ENCODE measurements at regions of chr15 and their contacts with region 1.

Region 1: DNA sequence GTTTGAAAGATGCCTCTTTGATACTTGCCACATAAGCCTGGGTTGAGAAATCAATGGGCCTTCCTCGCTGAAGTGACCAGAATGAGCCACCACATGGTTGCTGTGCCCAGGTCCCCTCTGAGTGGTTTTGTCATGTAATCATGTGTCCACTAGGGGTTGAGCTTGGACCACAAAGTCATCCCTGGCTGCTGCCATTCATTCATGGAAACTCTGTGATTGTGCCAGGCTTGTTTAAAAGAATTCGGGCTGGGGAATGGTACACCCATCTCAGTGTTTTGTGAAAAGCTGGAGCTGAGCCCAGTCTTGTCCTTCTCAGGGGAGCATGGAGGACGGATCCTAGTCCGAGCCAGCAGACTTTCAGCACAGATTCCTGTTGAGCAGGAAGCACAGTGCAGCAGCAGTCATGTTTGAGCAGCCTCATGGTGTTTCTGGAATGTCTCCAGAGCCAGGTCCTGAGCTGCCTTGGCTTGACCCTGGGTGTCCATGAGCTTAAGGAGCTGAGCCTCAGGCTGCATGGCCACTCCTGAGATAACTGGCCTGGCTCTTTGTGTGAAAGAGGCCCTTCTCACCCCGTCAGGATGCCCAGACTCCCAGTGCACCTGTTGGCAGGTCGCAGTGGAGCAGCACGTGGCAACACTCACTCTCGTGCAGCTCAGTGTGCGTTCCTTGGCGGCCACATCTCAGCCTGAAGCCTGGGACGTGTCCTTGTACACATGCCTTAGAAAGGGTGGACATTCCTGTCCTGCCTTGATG is 260.3 kb upstream of the TPM1 start:
- DNase-seq: peak; percentile 50 to 93
- ATAC-seq: peak; percentile 89 to 95 (median 93)
- H3K4me3 ChIP-seq: no peak overlapping the region
- H3K27ac ChIP-seq: peak overlapping the region in 9 of 10 donors; percentile 23 to 80 (median 69)
- H3K4me1 ChIP-seq: peaks cover 11 to 62% (median 43%) of the 10 kb centered on the region in 9 donors
- H3K27me3 ChIP-seq: no peaks in the 10 kb centered on the region
- CTCF ChIP-seq: peak; percentile 55 to 84 (median 71)

Region 2: GRCh38 chr15:62698646-62699045 is 83.6 kb before region 1 on chr15:
- intact Hi-C with region 1: no loop called
- DNase-seq: no peak
- ATAC-seq: peak in 5 of 8 donors; percentile 40 to 70 (median 46)
- H3K4me3 ChIP-seq: no peak overlapping the region
- H3K27ac ChIP-seq: no peak overlapping the region
- H3K4me1 ChIP-seq: no peaks in the 10 kb centered on the region
- H3K27me3 ChIP-seq: no peaks in the 10 kb centered on the region
- CTCF ChIP-seq: peak in 5 of 9 donors; percentile 7 to 16 (median 14)

Region 3: GRCh38 chr15:62847900-62848489 is 65.8 kb after region 1 on chr15:
- intact Hi-C with region 1: loop called in 6 of 10 experiments (anchors 2 to 10 kb)
- DNase-seq: peak; percentile 74
- ATAC-seq: peak; percentile 57 to 82 (median 75)
- H3K4me3 ChIP-seq: no peak overlapping the region
- H3K27ac ChIP-seq: peak overlapping the region in 5 of 10 donors; percentile 11 to 30 (median 21)
- H3K4me1 ChIP-seq: peaks cover 0 to 49% (median 22%) of the 10 kb centered on the region in 9 donors
- H3K27me3 ChIP-seq: no peaks in the 10 kb centered on the region
- CTCF ChIP-seq: peak; percentile 64 to 87 (median 80)

Region 4: GRCh38 chr15:63041974-63042819 is 260.0 kb after region 1 on chr15 and contains the start of gene TPM1:
- intact Hi-C with region 1: loop called in 6 of 10 experiments (anchors 1 to 10 kb)
- DNase-seq: peak; percentile 88 to 89
- ATAC-seq: peak; percentile 76 to 86 (median 84)
- H3K4me3 ChIP-seq: peak within 1 kb of the TSS; percentile 66 to 92 (median 80)
- H3K27ac ChIP-seq: peak within 1 kb of the TSS; percentile 90 to 100 (median 98)
- H3K4me1 ChIP-seq: peaks cover 0 to 41% (median 13%) of the 10 kb centered on the region in 9 donors
- H3K27me3 ChIP-seq: peaks cover 0 to 80% (median 0%) of the 10 kb centered on the region in 7 donors
- CTCF ChIP-seq: peak in 4 of 9 donors; percentile 8 to 38 (median 30)
- total RNA-seq, gene TPM1: 11,955 to 17,571 (median 14,403) TPM

Region 5: GRCh38 chr15:63093486-63094205 is 311.4 kb after region 1 on chr15:
- intact Hi-C with region 1: loop called (anchors 2 to 10 kb)
- DNase-seq: peak; percentile 72 to 86
- ATAC-seq: peak; percentile 85 to 96 (median 92)
- H3K4me3 ChIP-seq: no peak overlapping the region
- H3K27ac ChIP-seq: peak overlapping the region in 4 of 10 donors; percentile 28 to 66 (median 39)
- H3K4me1 ChIP-seq: peaks cover 8 to 30% (median 21%) of the 10 kb centered on the region in 9 donors
- H3K27me3 ChIP-seq: no peaks in the 10 kb centered on the region
- CTCF ChIP-seq: peak; percentile 82 to 97 (median 90)

Region 6: DNA sequence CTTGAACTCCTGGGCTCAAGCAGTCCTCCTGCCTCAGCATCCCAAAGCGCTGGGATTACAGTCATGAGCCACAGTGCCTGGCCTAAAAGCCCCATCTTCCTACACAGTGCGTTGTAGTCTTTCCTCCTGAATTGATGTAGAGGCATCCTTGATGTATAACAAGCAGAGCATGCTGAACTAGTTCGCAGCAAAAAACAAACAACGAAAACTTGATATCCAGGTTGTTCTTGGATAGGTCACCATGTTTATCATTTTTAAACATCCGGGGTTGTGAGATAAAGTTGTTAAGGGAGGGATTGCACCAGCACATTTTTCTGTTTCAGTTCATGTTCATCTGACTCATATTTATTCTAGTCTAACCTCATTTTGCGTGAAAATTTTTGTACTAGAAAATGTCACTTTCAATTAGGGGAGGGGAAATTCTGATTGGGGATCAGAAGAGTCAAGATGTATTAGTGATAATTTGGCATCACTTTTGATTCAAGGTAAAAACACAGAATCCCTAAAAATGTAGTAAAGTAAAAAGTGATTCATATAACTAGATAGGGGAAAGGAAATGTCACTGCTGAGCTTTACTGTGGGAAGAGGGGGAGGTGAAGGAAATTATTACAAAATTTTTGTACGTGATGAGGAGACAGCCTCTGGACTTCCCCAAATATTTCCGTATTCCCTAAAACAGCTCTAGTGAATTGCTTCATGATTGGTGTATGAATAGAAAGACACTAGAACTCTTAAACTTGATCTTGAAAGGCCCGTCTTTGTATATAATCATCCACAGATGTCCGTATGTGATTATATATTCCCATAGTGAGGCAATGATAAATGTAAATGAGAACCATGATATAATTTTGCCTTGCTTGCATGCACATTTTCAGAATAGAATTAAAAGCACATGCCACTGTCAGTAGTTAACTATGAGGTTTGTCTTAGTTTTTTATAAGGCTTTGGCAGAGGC is 430.1 kb after region 1 on chr15:
- intact Hi-C with region 1: no loop called
- DNase-seq: no peak
- ATAC-seq: peak in 7 of 8 donors; percentile 51 to 78 (median 57)
- H3K4me3 ChIP-seq: no peak overlapping the region
- H3K27ac ChIP-seq: peak overlapping the region in 8 of 10 donors; percentile 25 to 83 (median 42)
- H3K4me1 ChIP-seq: peaks cover 0 to 58% (median 34%) of the 10 kb centered on the region in 9 donors
- H3K27me3 ChIP-seq: no peaks in the 10 kb centered on the region
- CTCF ChIP-seq: no peak

Measured in heart right ventricle (tissue), 16 donors.